Right ventricle myocardium inferior (tissue), 1 donor: ENCODE measurements at regions of chr5 and their contacts with region 1.

Region 1: GRCh38 chr5:43066799-43067741 is 27.0 kb upstream of the ANXA2R start:
- DNase-seq: peak; percentile 92
- ATAC-seq: peak; percentile 74

Region 2: DNA sequence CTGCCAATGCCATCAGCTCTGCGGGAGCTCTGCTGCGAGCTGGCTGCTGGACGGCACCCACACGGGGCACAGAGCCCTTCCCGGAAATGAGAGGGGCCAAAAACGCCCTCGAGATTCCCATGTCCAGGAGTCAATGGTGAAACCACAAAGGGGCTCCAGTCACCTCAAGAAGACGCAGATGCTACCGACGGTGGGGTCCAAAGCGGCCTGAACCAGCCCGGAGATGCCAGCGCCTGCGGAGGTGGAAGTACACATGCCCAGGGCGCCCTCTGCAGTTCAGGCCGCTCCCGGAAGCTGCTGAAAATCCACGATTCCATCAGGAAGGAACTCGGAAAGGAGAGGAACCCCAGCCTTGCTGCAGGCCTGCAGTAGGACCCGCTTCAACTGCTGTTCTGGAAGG is 173.0 kb before region 1 on chr5:
- intact Hi-C with region 1: no loop called
- DNase-seq: peak; percentile 70
- ATAC-seq: no peak

Region 3: GRCh38 chr5:42994246-42995151 is 72.6 kb before region 1 on chr5:
- intact Hi-C with region 1: loop called (anchors 2 kb)
- DNase-seq: peak; percentile 90
- ATAC-seq: peak; percentile 78

Region 4: DNA sequence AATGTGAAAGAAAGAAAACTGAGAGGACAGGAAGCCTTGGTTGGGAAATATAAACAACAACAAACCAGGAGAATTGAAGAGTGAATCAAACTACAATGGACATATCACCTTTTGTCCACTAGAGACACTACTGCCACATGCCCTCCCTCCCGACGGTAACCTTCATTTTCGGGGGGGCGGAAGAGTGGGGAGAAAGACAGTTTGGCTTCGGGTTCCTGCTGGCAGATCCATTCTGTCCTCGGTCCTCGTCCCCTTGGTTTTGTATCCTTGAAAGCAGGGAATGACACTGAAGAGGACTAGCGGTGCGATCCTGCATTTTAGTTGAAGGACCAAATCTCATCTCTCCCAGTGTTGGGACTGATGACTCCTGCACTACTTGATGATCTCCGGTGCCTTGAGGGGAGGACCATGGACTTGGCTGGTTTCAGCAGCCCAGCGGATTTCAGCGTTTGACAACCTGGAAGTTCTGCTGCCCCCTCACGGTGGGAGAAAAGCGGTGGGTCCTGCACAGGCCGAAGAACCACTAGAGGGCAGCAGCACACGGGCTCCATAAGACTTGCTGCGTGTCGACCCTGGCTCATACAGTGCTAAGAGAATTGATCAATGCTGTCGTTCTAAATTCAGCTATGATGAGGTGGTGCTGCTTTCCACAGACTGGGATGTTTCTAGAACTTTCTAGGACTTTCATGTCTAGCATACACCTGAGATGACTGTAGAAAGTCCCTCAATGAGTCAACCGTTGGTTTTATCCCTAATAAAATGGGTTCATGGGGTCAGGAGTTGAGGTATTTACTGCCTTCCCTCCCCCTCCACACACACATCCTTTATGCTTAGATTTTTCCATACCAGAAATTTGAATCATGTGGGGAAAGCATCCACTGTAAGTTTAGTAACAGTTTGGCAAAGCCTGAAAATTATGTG is 38.6 kb after region 1 on chr5:
- intact Hi-C with region 1: loop called (anchors 2 kb)
- DNase-seq: peak; percentile 91
- ATAC-seq: peak; percentile 95

Region 5: GRCh38 chr5:43313035-43313853 is 246.2 kb after region 1 on chr5 and contains the start of gene HMGCS1:
- intact Hi-C with region 1: loop called (anchors 5 kb)
- DNase-seq: peak; percentile 98
- ATAC-seq: peak; percentile 99
- total RNA-seq, gene HMGCS1: 23.1 TPM